WTC11 (cell line): ENCODE measurements at regions of chr5 and their contacts with region 1.

Region 1: GRCh38 chr5:178732281-178732680 is 1.8 kb upstream of the ZNF354A start:
- DNase-seq: no peak
- ATAC-seq: no peak
- H3K4me3 Mint-ChIP-seq: no peak overlapping the region
- H3K27ac Mint-ChIP-seq: no peak overlapping the region
- H3K4me1 Mint-ChIP-seq: peaks cover 13% of the 10 kb centered on the region; the same call in 1 of the 2 replicates
- H3K27me3 Mint-ChIP-seq: peaks cover 13% of the 10 kb centered on the region
- CTCF ChIP-seq: no peak

Region 2: DNA sequence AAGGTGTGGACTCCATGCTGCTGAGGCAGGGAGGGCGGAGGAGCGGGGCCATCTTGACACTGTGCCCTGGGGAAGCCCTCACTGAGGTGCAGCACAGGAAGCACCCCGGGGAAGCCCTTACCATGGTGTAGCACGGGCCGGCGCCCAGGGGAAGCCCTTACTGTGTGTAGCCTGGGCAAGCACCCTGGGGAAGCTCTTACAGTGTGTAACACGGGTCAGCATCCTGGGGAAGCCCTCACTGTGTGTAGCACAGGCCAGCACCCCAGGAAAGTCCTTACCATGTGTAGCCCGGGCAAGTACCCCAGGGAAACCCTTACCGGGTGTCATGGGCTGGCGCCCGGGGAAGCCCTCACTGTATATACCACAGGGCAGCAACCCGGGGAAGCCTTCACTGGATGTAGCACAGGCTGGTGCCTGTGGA is 64.8 kb after region 1 on chr5:
- CTCF ChIA-PET with region 1: no interaction called
- POLR2A ChIA-PET with region 1: no interaction called
- DNase-seq: no peak
- ATAC-seq: no peak
- H3K4me3 Mint-ChIP-seq: no peak overlapping the region
- H3K27ac Mint-ChIP-seq: no peak overlapping the region
- H3K4me1 Mint-ChIP-seq: peaks cover 14% of the 10 kb centered on the region
- H3K27me3 Mint-ChIP-seq: no peaks in the 10 kb centered on the region
- CTCF ChIP-seq: no peak

Region 3: DNA sequence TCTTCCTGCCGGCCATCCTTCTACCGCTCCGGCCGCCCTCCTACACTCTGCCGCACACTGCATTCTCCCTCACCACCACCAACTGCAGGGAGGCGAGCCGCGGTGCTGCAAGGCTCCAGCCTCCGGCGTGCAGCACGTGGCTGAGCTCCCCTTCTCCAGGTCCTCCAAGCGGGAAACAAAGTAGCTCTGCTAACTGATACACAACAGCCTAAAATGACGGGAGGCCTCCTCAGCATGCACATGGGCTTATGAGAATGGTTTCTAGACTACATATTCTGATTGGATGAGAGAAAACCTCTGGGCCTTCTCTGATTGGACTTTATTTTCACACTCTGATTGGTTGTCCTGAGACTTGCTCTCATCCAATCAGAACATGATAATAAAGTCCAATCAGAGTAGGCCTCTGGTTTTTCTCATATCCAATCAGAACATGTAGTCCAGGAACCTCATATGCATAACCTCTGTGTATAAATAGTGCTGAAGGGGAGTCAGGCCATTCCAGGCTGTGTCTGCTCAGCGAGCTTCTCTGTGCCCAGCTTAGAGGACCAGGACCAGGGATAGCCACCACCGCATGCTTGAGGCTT is 100.4 kb after region 1 on chr5:
- CTCF ChIA-PET with region 1: interaction called, 17 read pairs
- POLR2A ChIA-PET with region 1: interaction called, 3 read pairs
- DNase-seq: peak; percentile 52
- ATAC-seq: peak; percentile 60
- H3K4me3 Mint-ChIP-seq: peak overlapping the region; percentile 94
- H3K27ac Mint-ChIP-seq: peak overlapping the region; percentile 94
- H3K4me1 Mint-ChIP-seq: peaks cover 39% of the 10 kb centered on the region
- H3K27me3 Mint-ChIP-seq: no peaks in the 10 kb centered on the region
- CTCF ChIP-seq: no peak

Region 4: DNA sequence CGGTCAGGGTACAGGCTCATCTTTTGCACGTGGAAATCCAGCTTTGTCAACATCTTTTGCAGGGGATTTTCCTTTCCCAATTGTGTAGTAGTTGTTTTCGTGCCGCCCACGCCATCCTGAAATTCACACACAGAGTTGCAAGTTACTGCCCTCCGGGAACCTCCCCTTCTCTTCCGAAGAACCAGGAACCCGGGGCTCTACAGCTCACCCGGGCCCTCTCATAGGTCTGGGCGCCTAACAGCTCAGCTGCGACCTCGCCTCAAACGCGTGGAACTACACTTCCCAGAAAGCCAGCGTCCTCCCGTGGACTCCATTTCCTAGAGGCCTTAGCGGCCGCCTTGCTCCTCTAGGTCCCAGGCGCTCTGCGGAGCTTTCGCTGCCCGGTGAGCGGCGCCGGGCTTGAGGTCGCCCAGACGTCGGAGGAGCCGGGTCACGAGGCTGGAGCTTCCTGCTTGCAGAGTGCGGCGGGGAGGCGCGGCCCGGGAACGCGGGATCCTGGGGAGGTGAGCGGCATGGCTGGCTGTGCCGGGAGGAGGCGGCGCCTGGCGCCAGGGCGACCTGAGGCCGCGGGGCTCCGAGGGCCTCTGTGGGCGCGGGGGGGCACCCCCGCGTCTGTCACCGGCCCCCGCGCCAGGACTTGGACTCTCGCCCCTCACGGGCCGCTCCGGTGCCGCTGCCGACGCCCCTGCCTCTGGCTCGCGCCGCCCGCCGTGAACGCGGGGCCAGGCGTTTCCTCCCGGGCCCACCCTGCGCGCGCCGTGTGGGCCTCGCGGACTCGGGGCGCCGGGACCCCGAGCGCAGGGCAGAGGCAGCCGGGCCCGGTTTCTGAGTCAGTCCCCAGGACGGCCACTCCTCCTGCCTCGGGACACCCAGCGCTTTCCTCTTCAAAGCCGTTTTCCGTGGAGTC is 127.6 kb after region 1 on chr5 and contains the start of gene ZNF354B:
- CTCF ChIA-PET with region 1: interaction called, 23 read pairs
- POLR2A ChIA-PET with region 1: interaction called, 5 read pairs
- DNase-seq: peak; percentile 91
- ATAC-seq: peak; percentile 99
- H3K4me3 Mint-ChIP-seq: peak within 1 kb of the TSS; percentile 66
- H3K27ac Mint-ChIP-seq: no peak within 1 kb of the TSS
- H3K4me1 Mint-ChIP-seq: peaks cover 14% of the 10 kb centered on the region
- H3K27me3 Mint-ChIP-seq: 0 out of 2 replicates have a peak, but pooled peaks cover under 1% of the 10 kb centered on the region
- CTCF ChIP-seq: no peak
- total RNA-seq, gene ZNF354B: 22.1 to 26.2 TPM (median 25.0 TPM) in 3 replicates